ENCODE measurements at regions of chr17 and their contacts with region 1.

Region 1: DNA sequence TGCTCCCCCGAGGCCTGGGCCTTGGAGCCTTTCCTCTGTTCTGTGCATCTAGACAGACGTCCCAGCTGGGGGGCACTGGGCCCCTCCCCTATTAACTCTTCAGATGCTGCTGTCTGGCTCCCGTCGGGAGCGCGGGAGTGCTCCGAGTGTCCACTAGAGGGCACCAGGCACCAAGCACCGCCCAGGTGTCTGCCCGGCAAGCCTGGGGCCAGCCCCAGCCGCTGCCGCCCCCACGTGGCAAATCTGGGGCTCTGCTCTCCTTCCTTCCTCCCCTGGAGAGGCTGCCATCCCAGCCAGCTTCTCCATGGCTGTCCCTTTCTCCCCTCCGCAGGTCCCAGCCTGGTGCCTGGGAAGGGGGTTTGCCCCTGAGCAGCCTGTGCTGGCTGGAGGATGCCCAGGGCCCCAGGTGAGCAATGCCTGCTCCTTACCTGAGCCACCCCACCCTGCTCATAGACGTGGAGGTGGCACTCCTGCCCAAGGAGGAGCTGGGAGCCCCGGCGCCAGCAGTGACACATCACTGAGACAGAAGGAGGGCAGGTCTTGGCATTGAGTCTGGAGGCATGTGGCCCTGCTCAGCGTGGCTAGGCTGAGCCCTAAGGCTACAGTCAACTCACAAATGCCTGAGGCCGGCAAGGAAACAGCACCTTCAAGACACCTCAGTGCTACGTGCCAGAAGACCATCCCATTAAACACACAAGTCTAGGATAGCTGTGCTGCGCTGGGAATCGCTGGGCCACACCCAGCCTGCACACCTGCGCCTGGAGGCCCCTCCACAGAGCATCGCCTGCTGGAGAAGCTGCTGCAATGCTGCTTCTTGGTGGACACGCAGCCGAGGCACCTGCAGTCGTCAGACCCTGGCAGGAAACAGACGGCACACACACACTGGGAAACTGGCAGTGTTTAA is 19.7 kb downstream of the TMEM235 start:
- DNase-seq: peak; percentile 90 to 98
- ATAC-seq: peak; percentile 81 to 90
- H3K4me3 ChIP-seq: no peak overlapping the region
- H3K27ac ChIP-seq: peak overlapping the region; percentile 52 to 73; a peak in 5 of 6 replicates
- H3K4me1 ChIP-seq: peaks cover 10% of the 10 kb centered on the region
- CTCF ChIP-seq: peak; percentile 100
- EP300 ChIP-seq: no peak
- POLR2A ChIP-seq: no peak
- RAD21 ChIP-seq: peak; percentile 98

Region 2: DNA sequence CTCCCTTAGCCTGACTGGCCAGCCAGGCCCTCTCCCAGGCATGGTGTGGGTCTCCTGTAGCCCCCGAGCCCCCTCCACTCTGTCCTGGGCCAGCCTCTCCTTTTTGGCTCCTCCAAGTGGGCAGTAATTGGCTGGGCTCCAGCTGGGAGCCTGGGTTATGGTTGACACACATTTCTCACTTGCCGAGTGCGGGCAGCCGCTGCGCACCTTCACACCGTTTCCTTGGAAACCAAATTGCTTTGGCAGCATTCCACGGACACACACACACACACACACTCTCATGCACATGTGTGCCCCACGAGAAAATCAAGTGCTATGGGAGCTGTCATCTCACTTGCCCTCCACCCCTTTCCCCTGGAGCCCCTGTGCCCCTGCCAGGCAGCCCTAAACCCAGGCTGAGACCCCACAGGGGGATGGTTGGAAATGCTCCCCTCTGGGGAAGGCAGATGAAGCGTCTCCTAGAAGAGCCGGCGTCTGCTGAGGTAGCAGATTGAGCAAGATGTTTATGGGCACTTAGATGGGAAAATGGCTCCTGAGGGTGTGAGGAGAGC is 695.3 kb before region 1 on chr17:
- CTCF ChIA-PET with region 1: no interaction called
- POLR2A ChIA-PET with region 1: no interaction called
- DNase-seq: peak in 1 of 2 experiments; percentile 34
- ATAC-seq: peak in 1 of 2 experiments; percentile 24; a peak in 3 of 6 replicates
- H3K4me3 ChIP-seq: no peak overlapping the region
- H3K27ac ChIP-seq: no peak overlapping the region
- H3K4me1 ChIP-seq: 0 out of 3 replicates have a peak, but pooled peaks cover 3% of the 10 kb centered on the region
- CTCF ChIP-seq: no peak
- EP300 ChIP-seq: no peak
- POLR2A ChIP-seq: no peak
- RAD21 ChIP-seq: no peak

Region 3: GRCh38 chr17:78019367-78019975 is 231.7 kb before region 1 on chr17:
- CTCF ChIA-PET with region 1: interaction called, 54 read pairs
- POLR2A ChIA-PET with region 1: no interaction called
- DNase-seq: peak in 1 of 2 experiments; percentile 53
- ATAC-seq: peak in 1 of 2 experiments; percentile 70; a peak in 3 of 6 replicates
- H3K4me3 ChIP-seq: no peak overlapping the region
- H3K27ac ChIP-seq: no peak overlapping the region
- H3K4me1 ChIP-seq: no peaks in the 10 kb centered on the region
- CTCF ChIP-seq: peak; percentile 86
- EP300 ChIP-seq: no peak
- POLR2A ChIP-seq: no peak
- RAD21 ChIP-seq: peak; percentile 77 to 82

Region 4: GRCh38 chr17:78120971-78121800 is 130.0 kb before region 1 on chr17:
- CTCF ChIA-PET with region 1: interaction called, 12 read pairs
- POLR2A ChIA-PET with region 1: no interaction called
- DNase-seq: no peak
- ATAC-seq: no peak
- H3K4me3 ChIP-seq: no peak overlapping the region
- H3K27ac ChIP-seq: no peak overlapping the region
- H3K4me1 ChIP-seq: no peaks in the 10 kb centered on the region
- CTCF ChIP-seq: no peak
- EP300 ChIP-seq: no peak
- POLR2A ChIP-seq: no peak
- RAD21 ChIP-seq: no peak

Region 5: GRCh38 chr17:78226749-78227399 is 24.3 kb before region 1 on chr17:
- CTCF ChIA-PET with region 1: interaction called, 150 read pairs
- POLR2A ChIA-PET with region 1: no interaction called
- DNase-seq: no peak
- ATAC-seq: peak in 1 of 2 experiments; percentile 14; a peak in 3 of 6 replicates
- H3K4me3 ChIP-seq: no peak overlapping the region
- H3K27ac ChIP-seq: no peak overlapping the region
- H3K4me1 ChIP-seq: no peaks in the 10 kb centered on the region; the same call in 2 of the 3 replicates
- CTCF ChIP-seq: no peak
- EP300 ChIP-seq: no peak
- POLR2A ChIP-seq: no peak
- RAD21 ChIP-seq: no peak

Region 6: DNA sequence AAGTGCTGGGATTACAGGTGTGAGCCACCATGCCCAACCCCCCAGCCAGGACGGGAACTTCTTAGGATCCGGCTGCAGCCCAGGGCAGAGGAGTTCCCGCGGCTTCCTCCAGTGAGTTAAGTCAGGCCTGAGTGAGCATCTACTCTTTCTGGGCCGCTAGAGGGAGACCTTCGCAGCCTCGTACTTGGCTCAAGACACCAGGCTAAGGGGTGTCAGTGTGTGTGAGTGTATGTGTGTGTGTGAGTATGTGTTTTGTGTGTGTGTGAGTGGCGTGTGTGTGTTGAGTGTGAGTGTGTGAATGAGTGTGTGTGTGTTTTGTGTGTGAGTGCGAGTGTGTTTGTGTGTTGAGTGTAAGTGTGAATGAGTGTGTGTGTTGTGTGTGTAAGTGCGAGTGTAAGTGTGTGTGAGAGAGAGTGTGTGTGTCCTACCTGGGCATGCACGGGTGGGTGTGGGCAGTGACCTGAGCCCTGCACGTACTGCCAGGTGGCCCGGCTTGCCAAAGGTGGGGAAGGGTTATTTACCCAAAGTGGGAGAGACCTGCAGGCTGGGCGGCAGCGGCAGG is 38.7 kb after region 1 on chr17:
- CTCF ChIA-PET with region 1: interaction called, 16 read pairs
- POLR2A ChIA-PET with region 1: no interaction called
- DNase-seq: peak; percentile 85 to 94
- ATAC-seq: peak; percentile 96 to 98
- H3K4me3 ChIP-seq: no peak overlapping the region
- H3K27ac ChIP-seq: peak overlapping the region in 1 of 2 experiments; percentile 59; a peak in 2 of 6 replicates
- H3K4me1 ChIP-seq: peaks cover 4% of the 10 kb centered on the region; the same call in 2 of the 3 replicates
- CTCF ChIP-seq: peak; percentile 85
- EP300 ChIP-seq: no peak
- POLR2A ChIP-seq: no peak
- RAD21 ChIP-seq: peak; percentile 90 to 96

Region 7: DNA sequence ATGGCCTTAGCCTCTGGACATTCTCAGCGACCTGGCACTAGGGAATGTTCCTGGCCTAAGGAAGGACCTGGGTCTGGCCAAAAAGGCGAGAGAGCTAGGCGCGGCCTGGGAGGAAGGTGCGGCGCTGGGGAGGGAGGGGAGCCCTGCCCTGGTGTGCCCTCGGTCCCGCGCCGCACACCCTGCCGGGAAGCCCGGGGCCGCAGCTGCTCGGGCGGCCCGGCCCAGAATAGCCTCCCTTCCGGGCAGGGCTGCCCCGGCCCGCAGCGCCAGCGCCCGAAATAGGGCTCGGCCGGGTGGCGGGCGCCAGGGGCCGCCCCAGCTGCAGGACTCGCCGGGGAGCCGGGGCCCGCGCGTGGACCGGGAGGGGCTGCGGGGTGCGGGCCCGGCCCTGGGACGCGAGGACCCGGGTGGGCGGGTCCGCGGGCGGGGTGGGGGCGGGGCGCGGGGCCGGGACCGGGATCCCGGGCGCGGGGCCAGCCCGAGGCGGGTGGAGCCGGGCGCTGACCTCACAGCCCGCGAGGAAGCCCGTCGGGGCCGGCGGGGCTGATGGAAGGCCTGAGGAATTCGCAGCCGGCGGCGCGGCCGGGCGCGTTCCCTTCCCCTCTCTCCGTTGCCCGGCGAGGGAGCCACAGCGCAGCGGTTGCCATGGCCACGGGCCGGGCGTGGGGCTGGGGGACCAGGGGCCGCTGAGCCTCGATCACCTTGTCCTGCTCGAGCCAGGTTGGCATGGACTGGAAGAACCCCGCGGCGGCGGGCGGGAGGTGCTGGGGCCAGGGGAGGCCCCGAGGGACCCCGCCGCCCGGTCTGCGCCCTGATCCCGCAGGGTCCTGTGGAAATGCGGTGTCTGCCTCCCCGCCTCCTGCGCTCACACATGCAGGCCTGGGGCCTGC is 90.7 kb after region 1 on chr17:
- CTCF ChIA-PET with region 1: interaction called, 12 read pairs
- POLR2A ChIA-PET with region 1: no interaction called
- DNase-seq: peak; percentile 77 to 83
- ATAC-seq: peak; percentile 58 to 61
- H3K4me3 ChIP-seq: peak overlapping the region; percentile 53
- H3K27ac ChIP-seq: peak overlapping the region; percentile 91 to 97
- H3K4me1 ChIP-seq: peaks cover 74% of the 10 kb centered on the region
- CTCF ChIP-seq: no peak; the same call in 2 of the 3 replicates
- EP300 ChIP-seq: no peak
- POLR2A ChIP-seq: peak; percentile 22; the same call in 1 of the 2 replicates
- RAD21 ChIP-seq: peak in 1 of 2 experiments; percentile 10; a peak in 1 of 5 replicates

Region 8: GRCh38 chr17:78421484-78422266 is 170.5 kb after region 1 on chr17:
- CTCF ChIA-PET with region 1: interaction called, 190 read pairs
- POLR2A ChIA-PET with region 1: no interaction called
- DNase-seq: peak; percentile 91 to 95
- ATAC-seq: peak; percentile 79 to 87
- H3K4me3 ChIP-seq: no peak overlapping the region
- H3K27ac ChIP-seq: peak overlapping the region; percentile 61 to 78
- H3K4me1 ChIP-seq: peaks cover 38% of the 10 kb centered on the region
- CTCF ChIP-seq: peak; percentile 98
- EP300 ChIP-seq: peak in 1 of 2 experiments; percentile 63; a peak in 2 of 5 replicates
- POLR2A ChIP-seq: no peak
- RAD21 ChIP-seq: peak; percentile 95 to 99

Measured in A549 (cell line).